Activated CD8-positive, alpha-beta T cell treated with anti-CD3 and anti-CD28 coated beads for 36 hours (primary cell): ENCODE measurements at regions of chr1 and their contacts with region 1.

Region 1: GRCh38 chr1:206583707-206584648 is 28.3 kb downstream of the EIF2D start:
- DNase-seq: peak; percentile 91
- ATAC-seq: peak; percentile 22
- H3K4me3 Mint-ChIP-seq: peak overlapping the region; percentile 76
- H3K27ac Mint-ChIP-seq: peak overlapping the region; percentile 100
- H3K4me1 Mint-ChIP-seq: peaks cover 88% of the 10 kb centered on the region
- H3K27me3 Mint-ChIP-seq: no peaks in the 10 kb centered on the region
- CTCF ChIP-seq: peak; percentile 96

Region 2: DNA sequence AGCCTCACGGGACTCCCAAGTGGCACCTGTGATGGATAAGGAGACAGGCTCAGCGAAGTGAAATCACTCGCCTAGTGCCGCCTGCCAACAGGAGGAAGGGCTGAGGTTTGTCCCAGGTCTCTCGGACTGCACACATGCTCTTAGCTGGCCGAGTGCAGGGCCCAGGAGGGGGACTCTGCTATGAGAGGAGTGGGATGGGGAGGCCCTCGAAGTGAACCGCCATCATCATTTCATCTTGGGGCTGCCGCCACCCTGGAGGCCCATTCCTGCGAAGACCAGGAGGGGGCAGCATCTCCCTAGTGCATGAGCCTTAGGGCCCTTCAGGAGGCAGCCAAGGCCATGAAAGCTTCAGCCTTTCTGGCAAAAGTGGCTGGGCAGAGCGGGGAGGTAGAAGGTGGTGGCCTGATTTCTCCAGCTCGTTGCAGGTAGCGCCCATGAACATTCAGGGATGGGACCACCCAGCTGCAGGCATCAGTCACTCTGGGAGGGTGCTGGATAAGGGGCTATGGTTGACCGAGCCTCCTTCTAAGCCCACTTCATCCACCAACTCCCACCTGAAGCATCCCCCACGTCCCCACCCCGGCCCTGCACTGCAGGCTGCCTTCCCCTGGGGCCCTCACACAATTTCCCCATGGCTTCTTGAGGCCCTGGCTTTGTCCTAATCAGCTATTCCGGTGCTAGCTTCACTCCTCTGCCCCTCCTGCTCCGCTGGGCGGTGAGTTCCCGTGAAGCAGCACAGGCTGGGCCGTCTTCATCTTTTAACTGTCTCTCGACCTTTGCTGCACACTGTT is 93.8 kb before region 1 on chr1:
- CTCF ChIA-PET with region 1: interaction called, 85 read pairs
- POLR2A ChIA-PET with region 1: interaction called, 4 read pairs
- intact Hi-C with region 1: no loop called
- DNase-seq: peak; percentile 84
- ATAC-seq: peak; percentile 98
- H3K4me3 Mint-ChIP-seq: no peak overlapping the region
- H3K27ac Mint-ChIP-seq: peak overlapping the region; percentile 42
- H3K4me1 Mint-ChIP-seq: peaks cover 2% of the 10 kb centered on the region
- H3K27me3 Mint-ChIP-seq: no peaks in the 10 kb centered on the region
- CTCF ChIP-seq: peak; percentile 86

Region 3: DNA sequence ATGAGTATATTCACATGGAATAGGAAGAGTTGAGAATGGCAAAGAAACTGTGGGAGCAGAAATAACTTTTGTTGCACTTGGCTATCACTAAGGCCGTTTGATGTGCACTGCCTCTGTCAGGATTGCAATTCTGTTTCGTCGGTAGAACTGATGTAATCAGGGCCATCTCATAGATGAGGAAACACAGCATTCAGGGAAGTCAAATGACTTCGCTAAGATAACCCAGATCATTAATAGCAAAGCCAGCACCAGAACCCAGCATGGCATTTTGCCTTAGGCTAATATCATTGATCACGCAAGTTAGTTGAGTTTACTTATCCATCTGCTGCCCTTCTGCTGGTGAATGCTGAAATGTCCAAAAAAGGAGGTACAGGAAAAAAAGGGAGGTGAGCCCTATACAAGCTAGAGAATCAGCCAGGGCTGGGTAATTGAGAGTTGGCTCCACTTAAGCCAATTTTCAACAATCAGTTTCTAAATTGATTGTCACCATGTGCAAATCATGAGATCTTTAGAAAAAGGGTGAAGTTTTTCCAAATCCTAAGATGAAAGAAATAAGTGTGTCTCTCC is 69.1 kb before region 1 on chr1:
- CTCF ChIA-PET with region 1: interaction called, 10 read pairs
- POLR2A ChIA-PET with region 1: interaction called, 3 read pairs
- intact Hi-C with region 1: no loop called
- DNase-seq: no peak
- ATAC-seq: no peak
- H3K4me3 Mint-ChIP-seq: no peak overlapping the region
- H3K27ac Mint-ChIP-seq: no peak overlapping the region
- H3K4me1 Mint-ChIP-seq: peaks cover 6% of the 10 kb centered on the region
- H3K27me3 Mint-ChIP-seq: peaks cover 6% of the 10 kb centered on the region
- CTCF ChIP-seq: no peak

Region 4: GRCh38 chr1:206556750-206557635 is 27.0 kb before region 1 on chr1:
- CTCF ChIA-PET with region 1: interaction called, 583 read pairs
- POLR2A ChIA-PET with region 1: interaction called, 1,021 read pairs
- intact Hi-C with region 1: loop called (anchors 2 kb)
- DNase-seq: peak; percentile 95
- ATAC-seq: peak; percentile 51
- H3K4me3 Mint-ChIP-seq: peak overlapping the region; percentile 96
- H3K27ac Mint-ChIP-seq: peak overlapping the region; percentile 100
- H3K4me1 Mint-ChIP-seq: peaks cover 59% of the 10 kb centered on the region
- H3K27me3 Mint-ChIP-seq: no peaks in the 10 kb centered on the region
- CTCF ChIP-seq: no peak

Region 5: DNA sequence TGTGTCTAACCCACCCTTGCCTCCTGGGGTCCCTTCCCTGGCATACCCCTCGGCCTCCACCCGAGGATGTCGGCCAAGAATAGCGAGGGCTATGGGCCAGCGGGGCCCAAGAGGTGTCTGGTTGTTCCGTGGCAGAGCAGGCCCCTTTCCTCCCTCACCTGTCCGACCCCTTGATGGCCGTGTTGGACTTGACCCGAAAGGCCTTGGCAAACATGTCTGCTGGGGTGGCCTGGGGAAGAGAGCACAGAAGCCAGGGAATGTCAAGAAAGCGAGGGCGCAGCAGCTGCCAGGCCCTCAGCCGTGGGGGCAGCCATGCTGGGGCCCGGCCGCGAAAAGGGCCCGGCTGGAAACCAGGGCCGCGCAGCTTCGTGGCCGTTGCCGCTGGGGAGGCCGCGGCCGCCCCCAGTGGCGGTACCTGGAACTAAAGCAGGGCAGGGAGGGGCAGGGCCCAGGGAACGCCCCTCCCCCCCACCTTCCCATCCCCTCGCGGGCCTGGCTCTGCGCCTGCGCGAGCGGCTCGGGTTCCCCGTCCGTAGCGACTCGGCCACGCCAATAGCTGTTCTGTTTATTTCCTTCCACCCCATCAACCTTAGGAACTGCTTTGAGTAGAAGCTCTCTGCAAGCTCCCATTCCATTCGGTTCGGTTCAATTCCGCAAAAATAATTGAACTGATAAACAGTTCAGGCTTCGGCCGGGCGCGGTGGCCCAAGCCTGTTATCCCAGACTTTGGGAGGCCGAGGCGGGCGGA is 28.3 kb after region 1 on chr1 and contains the start of gene EIF2D:
- CTCF ChIA-PET with region 1: interaction called, 17 read pairs
- POLR2A ChIA-PET with region 1: interaction called, 12 read pairs
- intact Hi-C with region 1: no loop called
- DNase-seq: peak; percentile 95
- ATAC-seq: peak; percentile 96
- H3K4me3 Mint-ChIP-seq: peak within 1 kb of the TSS; percentile 91
- H3K27ac Mint-ChIP-seq: peak within 1 kb of the TSS; percentile 92
- H3K4me1 Mint-ChIP-seq: peaks cover 39% of the 10 kb centered on the region
- H3K27me3 Mint-ChIP-seq: no peaks in the 10 kb centered on the region
- CTCF ChIP-seq: peak; percentile 89
- total RNA-seq, gene EIF2D: 100 to 102 TPM

Region 6: DNA sequence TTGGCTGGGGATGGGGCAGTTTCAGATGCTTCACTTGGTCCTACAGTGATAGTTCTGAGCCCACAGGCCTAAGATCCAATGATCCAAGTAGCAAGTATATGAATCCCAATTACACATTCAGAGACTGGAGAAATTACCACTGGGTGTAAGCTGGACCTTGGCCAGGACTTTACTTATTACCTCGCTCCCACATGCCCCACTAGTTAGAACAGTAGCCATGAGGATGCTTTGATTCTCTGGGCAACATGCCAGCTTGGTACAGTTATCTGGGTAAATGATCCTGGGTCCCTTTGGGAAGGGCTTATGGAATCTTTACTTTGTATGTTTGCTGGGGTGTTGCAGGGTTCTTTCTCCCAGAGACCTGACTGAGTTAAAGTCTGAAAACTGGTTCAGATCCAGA is 391.3 kb after region 1 on chr1:
- CTCF ChIA-PET with region 1: no interaction called
- POLR2A ChIA-PET with region 1: no interaction called
- intact Hi-C with region 1: no loop called
- DNase-seq: no peak
- ATAC-seq: no peak
- H3K4me3 Mint-ChIP-seq: no peak overlapping the region
- H3K27ac Mint-ChIP-seq: no peak overlapping the region
- H3K4me1 Mint-ChIP-seq: no peaks in the 10 kb centered on the region
- H3K27me3 Mint-ChIP-seq: peaks cover 5% of the 10 kb centered on the region
- CTCF ChIP-seq: no peak